ENCODE measurements at regions of chr5 and their contacts with region 1.

Region 1: DNA sequence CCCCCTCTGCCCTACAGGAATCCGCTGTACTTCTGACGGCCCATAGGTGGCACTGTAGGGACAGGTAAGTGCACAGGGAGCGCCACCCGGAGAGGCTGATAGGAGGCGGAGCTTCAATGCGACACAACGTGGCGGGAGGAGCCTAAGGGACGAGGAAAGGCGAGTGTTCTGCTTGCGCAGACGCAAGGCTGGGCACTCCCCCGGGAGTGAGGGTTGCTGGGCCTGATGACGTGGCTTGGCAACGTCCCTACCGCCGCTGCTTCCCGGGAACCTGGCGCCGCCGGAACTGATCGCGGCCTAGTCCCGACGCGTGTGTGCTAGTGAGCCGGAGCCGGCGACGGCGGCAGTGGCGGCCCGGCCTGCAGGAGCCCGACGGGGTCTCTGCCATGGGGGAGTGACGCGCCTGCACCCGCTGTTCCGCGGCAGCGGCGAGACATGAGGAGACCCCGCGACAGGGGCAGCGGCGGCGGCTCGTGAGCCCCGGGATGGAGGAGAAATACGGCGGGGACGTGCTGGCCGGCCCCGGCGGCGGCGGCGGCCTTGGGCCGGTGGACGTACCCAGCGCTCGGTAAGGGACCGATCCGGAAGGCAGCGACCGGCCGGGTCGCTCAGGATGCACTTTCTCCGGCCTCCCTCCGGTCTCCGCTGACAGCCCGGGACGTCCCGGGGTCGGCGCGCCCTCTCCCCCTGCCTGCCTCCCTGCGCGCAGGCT is at the start of gene SLC30A5:
- DNase-seq: peak; percentile 98
- ATAC-seq: peak; percentile 98
- H3K4me3 ChIP-seq: peak within 1 kb of the TSS; percentile 70 to 88 (median 72)
- H3K27ac ChIP-seq: peak within 1 kb of the TSS; percentile 88
- H3K4me1 ChIP-seq: peaks cover 47% of the 10 kb centered on the region
- H3K27me3 ChIP-seq: no peaks in the 10 kb centered on the region
- CTCF ChIP-seq: peak; percentile 98
- EP300 ChIP-seq: 0 out of 4 replicates have a peak, but pooled peaks have one; percentile 7 to 14
- POLR2A ChIP-seq: peak; percentile 92 to 95
- RAD21 ChIP-seq: peak; percentile 76
- total RNA-seq, gene SLC30A5: 38.0 and 53.6 TPM in 2 replicates

Region 2: GRCh38 chr5:68159224-68159951 is 934.5 kb before region 1 on chr5:
- CTCF ChIA-PET with region 1: no interaction called
- POLR2A ChIA-PET with region 1: no interaction called
- in situ Hi-C with region 1: no loop called
- intact Hi-C with region 1: no loop called
- DNase-seq: no peak
- ATAC-seq: no peak
- H3K4me3 ChIP-seq: no peak overlapping the region
- H3K27ac ChIP-seq: no peak overlapping the region
- H3K4me1 ChIP-seq: no peaks in the 10 kb centered on the region
- H3K27me3 ChIP-seq: no peaks in the 10 kb centered on the region; a peak in 1 of 5 replicates
- CTCF ChIP-seq: no peak
- EP300 ChIP-seq: no peak
- POLR2A ChIP-seq: no peak
- RAD21 ChIP-seq: no peak

Region 3: GRCh38 chr5:69048230-69048629 is 45.7 kb before region 1 on chr5:
- CTCF ChIA-PET with region 1: no interaction called
- POLR2A ChIA-PET with region 1: interaction called, 16 read pairs
- in situ Hi-C with region 1: no loop called
- intact Hi-C with region 1: no loop called
- DNase-seq: peak; percentile 7
- ATAC-seq: peak; percentile 66; the same call in 2 of the 3 replicates
- H3K4me3 ChIP-seq: no peak overlapping the region
- H3K27ac ChIP-seq: no peak overlapping the region
- H3K4me1 ChIP-seq: peaks cover 38% of the 10 kb centered on the region
- H3K27me3 ChIP-seq: no peaks in the 10 kb centered on the region
- CTCF ChIP-seq: peak; percentile 45
- EP300 ChIP-seq: no peak
- POLR2A ChIP-seq: no peak
- RAD21 ChIP-seq: no peak

Region 4: GRCh38 chr5:69152731-69153130 is 58.8 kb after region 1 on chr5:
- CTCF ChIA-PET with region 1: no interaction called
- POLR2A ChIA-PET with region 1: no interaction called
- in situ Hi-C with region 1: no loop called
- intact Hi-C with region 1: no loop called
- DNase-seq: no peak
- ATAC-seq: no peak
- H3K4me3 ChIP-seq: no peak overlapping the region
- H3K27ac ChIP-seq: no peak overlapping the region
- H3K4me1 ChIP-seq: peaks cover 10% of the 10 kb centered on the region; the same call in 1 of the 2 replicates
- H3K27me3 ChIP-seq: no peaks in the 10 kb centered on the region
- CTCF ChIP-seq: no peak
- EP300 ChIP-seq: no peak
- POLR2A ChIP-seq: no peak
- RAD21 ChIP-seq: no peak

Region 5: GRCh38 chr5:69217548-69218526 is 123.9 kb after region 1 on chr5:
- CTCF ChIA-PET with region 1: no interaction called
- POLR2A ChIA-PET with region 1: interaction called, 6 read pairs
- in situ Hi-C with region 1: no loop called
- intact Hi-C with region 1: loop called (anchors 5 kb)
- DNase-seq: peak; percentile 88
- ATAC-seq: peak; percentile 96
- H3K4me3 ChIP-seq: peak overlapping the region; percentile 86 to 100 (median 97)
- H3K27ac ChIP-seq: peak overlapping the region; percentile 97
- H3K4me1 ChIP-seq: peaks cover 69% of the 10 kb centered on the region
- H3K27me3 ChIP-seq: no peaks in the 10 kb centered on the region; a peak in 1 of 5 replicates
- CTCF ChIP-seq: 0 out of 2 replicates have a peak, but pooled peaks have one; percentile 4
- EP300 ChIP-seq: no peak; a peak in 1 of 4 replicates
- POLR2A ChIP-seq: peak; percentile 86 to 93
- RAD21 ChIP-seq: peak; percentile 41; the same call in 1 of the 2 replicates

Region 6: DNA sequence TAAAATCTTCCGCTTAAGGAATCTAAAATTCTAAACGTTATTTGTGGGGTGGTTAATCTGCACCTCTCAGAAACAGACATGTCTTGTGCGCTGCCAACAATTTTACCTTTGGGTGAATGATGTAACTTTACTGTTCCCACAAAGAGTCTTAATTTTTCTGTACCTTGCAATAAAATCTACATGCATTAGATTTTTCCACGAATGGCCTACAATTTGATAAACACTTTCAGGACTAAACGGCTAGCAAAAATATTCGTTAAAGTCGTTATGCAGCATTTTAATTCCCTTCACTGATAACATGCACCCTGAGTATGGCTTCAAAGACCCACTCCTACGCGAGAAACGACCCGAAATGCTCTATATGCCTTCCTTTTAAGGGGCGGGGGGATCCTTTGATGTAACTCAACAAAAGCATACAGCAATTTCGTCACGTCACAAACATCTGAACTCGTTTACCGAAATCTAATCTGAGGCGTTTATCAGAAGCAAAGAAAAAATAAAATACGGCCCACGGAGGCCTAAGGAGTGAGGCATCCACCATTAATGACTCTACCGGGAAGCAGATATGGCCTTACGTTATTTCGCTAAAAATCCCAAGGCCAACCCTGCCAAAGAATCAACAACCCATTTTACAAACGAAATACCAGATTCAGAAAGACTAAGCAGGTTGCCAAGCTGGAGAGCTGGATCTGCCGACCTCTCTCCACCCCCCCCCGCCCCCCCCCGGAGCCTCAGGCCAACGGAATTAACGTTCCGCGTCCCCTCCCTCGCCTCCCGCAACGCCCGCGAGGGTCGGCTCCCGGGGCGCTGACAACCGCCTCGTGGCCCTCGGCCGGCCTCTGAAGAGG is 274.8 kb after region 1 on chr5:
- CTCF ChIA-PET with region 1: no interaction called
- POLR2A ChIA-PET with region 1: interaction called, 5 read pairs
- in situ Hi-C with region 1: no loop called
- intact Hi-C with region 1: loop called (anchors 1 kb)
- DNase-seq: peak; percentile 57
- ATAC-seq: peak; percentile 24
- H3K4me3 ChIP-seq: peak overlapping the region; percentile 88 to 99 (median 93)
- H3K27ac ChIP-seq: peak overlapping the region; percentile 100
- H3K4me1 ChIP-seq: peaks cover 41% of the 10 kb centered on the region
- H3K27me3 ChIP-seq: no peaks in the 10 kb centered on the region; a peak in 1 of 5 replicates
- CTCF ChIP-seq: no peak
- EP300 ChIP-seq: no peak
- POLR2A ChIP-seq: peak in 1 of 2 experiments; percentile 27; a peak in 1 of 4 replicates
- RAD21 ChIP-seq: no peak

Measured in HepG2 (cell line).